ENCODE measurements at regions of chr2 and their contacts with region 1.

Region 1: GRCh38 chr2:217231212-217231611 is 371.3 kb upstream of the TNP1 start:
- DNase-seq: peak in 1 of 2 experiments; percentile 88
- H3K4me3 ChIP-seq: no peak overlapping the region
- H3K27ac ChIP-seq: peak overlapping the region; percentile 70
- H3K4me1 ChIP-seq: peaks cover 33% of the 10 kb centered on the region
- H3K27me3 ChIP-seq: no peaks in the 10 kb centered on the region
- CTCF ChIP-seq: no peak

Region 2: DNA sequence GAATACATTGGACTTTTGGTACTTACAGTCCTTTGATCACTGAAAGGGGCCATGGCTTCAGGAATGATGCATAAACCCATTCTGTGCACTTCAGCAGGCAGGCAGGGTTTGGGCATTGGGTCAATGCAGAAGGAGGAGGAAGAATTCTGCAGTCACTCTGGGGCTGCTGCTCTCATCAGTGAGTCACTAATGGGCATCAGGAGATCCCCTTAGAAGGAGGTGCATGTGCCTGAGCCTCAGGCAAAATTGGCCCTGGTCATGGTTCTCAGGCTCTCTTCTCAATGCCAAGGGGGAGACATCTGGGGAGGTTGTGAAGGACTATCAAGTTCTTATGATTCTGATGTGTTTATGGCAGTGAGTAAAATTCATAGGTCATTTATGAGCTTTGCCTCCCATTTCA is 319.3 kb before region 1 on chr2:
- CTCF ChIA-PET with region 1: no interaction called
- POLR2A ChIA-PET with region 1: no interaction called
- intact Hi-C with region 1: no loop called
- DNase-seq: peak in 1 of 2 experiments; percentile 55
- H3K4me3 ChIP-seq: no peak overlapping the region
- H3K27ac ChIP-seq: no peak overlapping the region
- H3K4me1 ChIP-seq: 0 out of 2 replicates have a peak, but pooled peaks cover under 1% of the 10 kb centered on the region
- H3K27me3 ChIP-seq: no peaks in the 10 kb centered on the region
- CTCF ChIP-seq: no peak

Region 3: DNA sequence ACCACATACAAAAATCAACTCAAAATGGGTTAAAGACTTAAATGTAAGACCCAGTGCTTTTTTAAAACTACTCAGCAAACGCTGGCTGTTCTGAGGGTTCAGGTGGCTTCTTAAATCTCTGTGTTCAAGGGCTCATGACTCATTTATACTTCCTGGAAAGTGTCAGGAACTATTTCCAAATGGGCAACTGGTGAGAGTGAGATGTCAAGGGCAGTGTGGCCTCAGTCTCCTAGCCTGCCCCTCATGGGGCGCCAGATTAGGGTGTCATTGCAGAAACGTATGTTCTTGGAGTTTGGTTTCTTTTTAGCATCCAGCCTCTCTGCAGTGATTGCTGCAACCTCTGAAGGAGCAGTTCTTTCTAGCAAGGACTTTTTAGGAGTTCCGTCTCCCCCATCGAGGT is 286.2 kb after region 1 on chr2:
- CTCF ChIA-PET with region 1: interaction called, 11 read pairs
- POLR2A ChIA-PET with region 1: no interaction called
- intact Hi-C with region 1: no loop called
- DNase-seq: no peak
- H3K4me3 ChIP-seq: no peak overlapping the region
- H3K27ac ChIP-seq: no peak overlapping the region
- H3K4me1 ChIP-seq: no peaks in the 10 kb centered on the region
- H3K27me3 ChIP-seq: no peaks in the 10 kb centered on the region
- CTCF ChIP-seq: no peak